ENCODE measurements at regions of chr20 and their contacts with region 1.

Region 1: DNA sequence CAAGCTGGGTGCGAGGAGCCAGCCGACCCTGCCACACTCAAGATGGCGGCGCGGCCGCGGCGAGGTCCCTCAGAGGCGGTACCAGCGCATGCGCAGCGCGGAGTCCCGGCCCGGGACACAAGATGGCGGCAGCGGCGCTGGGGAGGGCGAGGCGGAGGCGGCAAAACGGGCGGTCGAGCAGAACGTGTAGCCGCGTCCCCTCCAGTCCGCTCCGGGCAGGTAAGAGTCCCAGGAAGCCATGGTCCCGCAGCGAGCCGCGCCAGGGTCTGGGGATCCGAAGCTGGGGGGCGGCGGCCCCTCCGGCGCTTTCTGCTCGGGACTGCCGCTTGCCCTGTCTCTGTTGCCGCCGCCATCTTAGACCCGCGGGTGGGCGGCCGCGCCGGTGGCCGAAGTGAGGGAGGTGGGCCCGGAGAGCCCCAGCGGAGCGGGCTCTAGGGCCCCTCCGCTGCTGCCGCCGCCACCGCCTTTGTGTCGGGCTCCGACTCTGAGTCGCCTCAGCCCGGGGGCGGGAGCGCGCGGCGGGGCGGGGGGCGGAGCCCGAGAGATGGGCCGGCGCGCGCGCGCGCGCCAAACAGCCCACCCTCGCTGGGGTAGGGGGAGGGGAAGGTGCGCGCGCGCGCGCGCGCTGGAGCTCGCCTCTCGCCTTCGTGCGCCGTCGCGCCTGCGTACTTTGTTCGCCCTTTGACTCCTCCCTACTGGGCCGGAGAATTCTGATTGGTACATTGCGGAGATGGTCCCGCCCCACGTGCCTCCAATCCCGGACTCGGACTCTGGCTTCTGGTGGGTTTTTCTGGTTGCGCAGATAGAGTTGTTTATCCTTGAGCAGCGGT is at the start of gene PCIF1:
- DNase-seq: peak; percentile 98
- ATAC-seq: peak; percentile 63
- H3K4me3 Mint-ChIP-seq: peak within 1 kb of the TSS; percentile 96
- H3K27ac Mint-ChIP-seq: peak within 1 kb of the TSS; percentile 100
- H3K4me1 Mint-ChIP-seq: peaks cover 39% of the 10 kb centered on the region
- H3K27me3 Mint-ChIP-seq: no peaks in the 10 kb centered on the region
- CTCF ChIP-seq: no peak
- total RNA-seq, gene PCIF1: 37.7 to 42.2 TPM (median 39.4 TPM) in 3 replicates

Region 2: DNA sequence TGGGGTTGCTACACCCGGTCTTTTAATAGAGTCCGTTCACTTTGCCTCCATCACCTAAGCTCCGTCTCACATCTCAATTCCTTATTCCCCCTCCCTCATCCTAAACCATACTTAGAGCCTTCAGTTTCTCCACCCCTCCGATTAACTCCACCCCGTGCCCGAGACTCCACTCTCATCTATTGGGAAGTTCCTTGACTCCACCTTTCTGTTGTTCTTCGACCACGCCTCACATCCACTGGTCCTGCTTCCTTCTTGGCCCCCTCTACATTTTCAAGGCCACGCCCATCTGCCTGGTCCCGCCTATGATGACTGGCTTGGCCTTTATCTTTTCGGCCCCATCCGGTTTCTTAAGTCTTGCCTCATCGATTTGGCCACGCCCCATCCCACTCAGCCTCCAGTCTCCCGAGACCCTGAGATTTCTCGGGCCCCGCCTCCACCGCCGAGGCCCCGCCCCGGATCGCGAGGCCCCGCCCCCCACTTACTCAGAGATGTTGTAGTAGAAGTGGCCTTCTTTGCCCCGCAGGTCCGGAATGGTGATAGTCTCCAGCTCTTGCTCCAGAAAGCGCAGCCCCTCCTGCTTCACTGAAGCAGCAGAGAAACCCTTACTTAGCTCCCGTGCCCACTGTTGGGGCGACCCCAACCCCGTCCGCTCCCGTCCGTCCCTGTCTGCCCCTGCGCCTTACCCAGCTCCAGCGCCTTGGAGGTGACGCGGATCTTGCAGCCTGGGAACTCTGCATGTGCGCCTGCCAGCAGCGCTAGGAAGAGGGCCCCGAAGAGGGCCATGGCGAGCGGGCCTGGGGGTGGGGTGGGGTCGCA is 23.9 kb before region 1 on chr20:
- CTCF ChIA-PET with region 1: interaction called, 5 read pairs
- POLR2A ChIA-PET with region 1: interaction called, 43 read pairs
- DNase-seq: peak; percentile 100
- ATAC-seq: peak; percentile 91
- H3K4me3 Mint-ChIP-seq: peak overlapping the region; percentile 85
- H3K27ac Mint-ChIP-seq: peak overlapping the region; percentile 87; the same call in 1 of the 2 replicates
- H3K4me1 Mint-ChIP-seq: peaks cover 14% of the 10 kb centered on the region
- H3K27me3 Mint-ChIP-seq: no peaks in the 10 kb centered on the region
- CTCF ChIP-seq: no peak

Region 3: GRCh38 chr20:45946149-45946970 is 11.6 kb after region 1 on chr20:
- CTCF ChIA-PET with region 1: interaction called, 5 read pairs
- POLR2A ChIA-PET with region 1: interaction called, 14 read pairs
- DNase-seq: no peak
- ATAC-seq: no peak
- H3K4me3 Mint-ChIP-seq: no peak overlapping the region
- H3K27ac Mint-ChIP-seq: no peak overlapping the region
- H3K4me1 Mint-ChIP-seq: no peaks in the 10 kb centered on the region
- H3K27me3 Mint-ChIP-seq: no peaks in the 10 kb centered on the region
- CTCF ChIP-seq: no peak